ENCODE measurements at regions of chr19 and their contacts with region 1.

Region 1: GRCh38 chr19:47273313-47273977 is 1.2 kb upstream of the INAFM1 start:
- DNase-seq: peak; percentile 77
- H3K4me3 ChIP-seq: peak overlapping the region; percentile 76
- H3K27ac ChIP-seq: peak overlapping the region; percentile 97
- H3K27me3 ChIP-seq: no peaks in the 10 kb centered on the region
- CTCF ChIP-seq: no peak

Region 2: GRCh38 chr19:46776927-46777911 is 496.2 kb before region 1 on chr19:
- CTCF ChIA-PET with region 1: no interaction called
- POLR2A ChIA-PET with region 1: no interaction called
- DNase-seq: no peak
- H3K4me3 ChIP-seq: no peak overlapping the region
- H3K27ac ChIP-seq: no peak overlapping the region
- H3K27me3 ChIP-seq: no peaks in the 10 kb centered on the region
- CTCF ChIP-seq: no peak

Region 3: GRCh38 chr19:47256688-47257443 is 16.6 kb before region 1 on chr19:
- CTCF ChIA-PET with region 1: no interaction called
- POLR2A ChIA-PET with region 1: interaction called, 24 read pairs
- DNase-seq: peak; percentile 99
- H3K4me3 ChIP-seq: peak overlapping the region; percentile 75
- H3K27ac ChIP-seq: peak overlapping the region; percentile 96
- H3K27me3 ChIP-seq: no peaks in the 10 kb centered on the region
- CTCF ChIP-seq: no peak

Region 4: DNA sequence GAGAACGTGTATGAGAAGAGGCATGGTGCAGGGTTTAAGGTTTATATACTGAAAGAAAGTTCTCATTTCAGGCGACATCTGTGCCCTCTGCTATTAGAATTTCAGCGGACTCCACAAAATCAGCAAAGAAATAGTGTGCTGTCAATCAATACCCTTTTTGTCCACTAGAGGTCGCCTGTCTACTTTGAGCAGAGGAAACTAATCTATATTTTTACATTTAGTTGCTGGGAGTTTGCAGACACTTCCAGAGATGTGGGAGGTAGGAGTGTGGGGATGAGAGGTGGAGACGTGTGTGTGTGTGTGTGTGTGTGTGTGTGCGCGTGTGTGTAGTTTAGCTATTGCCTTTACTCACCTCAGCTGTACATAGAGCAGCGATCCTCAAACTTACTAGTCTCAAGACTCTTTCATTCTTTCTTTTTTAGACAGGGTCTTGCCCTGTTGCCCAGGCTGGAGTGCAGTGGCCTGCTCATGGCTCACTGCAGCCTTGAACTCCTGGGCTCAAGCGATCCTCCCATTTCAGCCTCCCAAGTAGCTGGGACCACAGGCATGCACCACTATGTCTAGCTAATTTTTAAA is 11.0 kb after region 1 on chr19:
- CTCF ChIA-PET with region 1: interaction called, 10 read pairs
- POLR2A ChIA-PET with region 1: interaction called, 5 read pairs
- DNase-seq: peak; percentile 33
- H3K4me3 ChIP-seq: no peak overlapping the region
- H3K27ac ChIP-seq: no peak overlapping the region
- H3K27me3 ChIP-seq: no peaks in the 10 kb centered on the region
- CTCF ChIP-seq: peak; percentile 83

Region 5: DNA sequence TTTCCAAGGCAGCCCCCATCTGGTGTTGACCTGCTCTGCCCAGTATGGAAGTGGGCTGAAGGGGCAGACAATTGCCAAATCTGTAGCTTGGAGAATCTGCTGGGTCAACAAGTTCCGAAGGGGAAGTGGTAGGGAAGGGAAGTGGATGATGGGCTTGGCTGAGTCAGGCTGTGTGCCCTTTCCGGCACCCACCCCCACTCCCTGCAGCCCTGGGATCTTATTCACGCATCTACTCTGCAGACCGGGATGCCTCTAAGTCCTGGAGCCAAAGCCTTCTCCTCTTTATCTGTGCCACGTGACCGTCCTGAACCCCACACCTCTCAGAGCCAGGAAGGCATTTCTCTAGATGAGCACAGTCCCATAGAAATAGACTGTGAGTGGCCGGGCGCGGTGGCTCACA is 51.1 kb after region 1 on chr19:
- CTCF ChIA-PET with region 1: no interaction called
- POLR2A ChIA-PET with region 1: no interaction called
- DNase-seq: no peak
- H3K4me3 ChIP-seq: no peak overlapping the region
- H3K27ac ChIP-seq: no peak overlapping the region
- H3K27me3 ChIP-seq: peaks cover 3% of the 10 kb centered on the region
- CTCF ChIP-seq: no peak

Region 6: DNA sequence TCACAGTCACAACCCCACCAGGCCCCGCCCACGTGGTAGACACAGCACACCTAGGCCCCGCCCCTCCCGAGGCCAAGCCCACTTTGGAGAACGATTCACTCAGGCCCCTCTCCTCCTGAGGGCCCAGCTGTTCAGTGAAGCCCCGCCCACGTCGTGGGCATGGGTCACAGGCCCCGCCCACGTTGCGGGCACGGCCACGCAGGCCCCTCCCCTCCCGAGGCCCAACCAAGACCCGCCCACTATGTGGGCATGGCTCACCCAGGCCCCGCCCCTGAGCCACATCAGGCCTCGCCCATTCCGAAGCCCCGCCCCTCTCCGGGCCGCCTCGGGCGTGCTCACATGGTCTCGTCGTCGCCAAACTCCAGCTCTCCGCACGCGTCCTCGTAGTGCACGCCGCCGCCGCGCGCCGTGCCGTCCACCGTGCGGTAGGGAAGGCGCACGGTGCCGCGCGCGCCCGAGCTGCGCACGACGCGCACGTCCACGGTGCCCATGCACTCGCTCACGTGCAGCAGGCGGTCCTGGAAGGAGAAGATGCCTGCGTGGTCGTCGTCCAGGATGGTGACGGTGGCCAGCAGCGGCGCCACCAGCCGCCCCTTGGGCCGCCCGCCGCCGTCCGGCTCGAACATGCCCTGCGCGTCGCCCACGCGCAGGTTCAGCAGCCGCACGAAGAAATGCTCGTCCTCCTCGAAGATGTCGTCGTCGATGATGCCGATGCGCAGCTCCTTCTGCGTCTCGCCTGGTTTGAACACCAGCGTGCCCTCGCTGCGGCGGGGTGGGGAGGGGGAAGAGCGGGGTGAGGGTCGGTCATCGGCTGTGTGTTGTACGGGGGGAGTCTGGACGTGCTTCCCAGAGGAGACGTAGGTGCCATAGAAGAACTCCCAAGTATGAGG is 174.3 kb after region 1 on chr19:
- CTCF ChIA-PET with region 1: no interaction called
- POLR2A ChIA-PET with region 1: no interaction called
- DNase-seq: no peak
- H3K4me3 ChIP-seq: no peak overlapping the region
- H3K27ac ChIP-seq: no peak overlapping the region
- H3K27me3 ChIP-seq: peaks cover 60% of the 10 kb centered on the region
- CTCF ChIP-seq: no peak

Measured in AG04450 (cell line).